ENCODE measurements at regions of chr15 and their contacts with region 1.

Region 1: GRCh38 chr15:40564591-40565332 is at the start of gene CCDC32:
- DNase-seq: peak; percentile 99
- H3K4me3 ChIP-seq: peak within 1 kb of the TSS; percentile 66 to 81 (median 71)
- H3K27ac ChIP-seq: peak within 1 kb of the TSS; percentile 85 to 93 (median 92)
- H3K4me1 ChIP-seq: peaks cover 22 to 46% (median 35%) of the 10 kb centered on the region in 4 donors
- H3K27me3 ChIP-seq: no peaks in the 10 kb centered on the region
- CTCF ChIP-seq: no peak
- EP300 ChIP-seq: no peak
- POLR2A ChIP-seq: peak; percentile 26
- total RNA-seq, gene CCDC32: 24.9 to 38.3 (median 36.0) TPM

Region 2: DNA sequence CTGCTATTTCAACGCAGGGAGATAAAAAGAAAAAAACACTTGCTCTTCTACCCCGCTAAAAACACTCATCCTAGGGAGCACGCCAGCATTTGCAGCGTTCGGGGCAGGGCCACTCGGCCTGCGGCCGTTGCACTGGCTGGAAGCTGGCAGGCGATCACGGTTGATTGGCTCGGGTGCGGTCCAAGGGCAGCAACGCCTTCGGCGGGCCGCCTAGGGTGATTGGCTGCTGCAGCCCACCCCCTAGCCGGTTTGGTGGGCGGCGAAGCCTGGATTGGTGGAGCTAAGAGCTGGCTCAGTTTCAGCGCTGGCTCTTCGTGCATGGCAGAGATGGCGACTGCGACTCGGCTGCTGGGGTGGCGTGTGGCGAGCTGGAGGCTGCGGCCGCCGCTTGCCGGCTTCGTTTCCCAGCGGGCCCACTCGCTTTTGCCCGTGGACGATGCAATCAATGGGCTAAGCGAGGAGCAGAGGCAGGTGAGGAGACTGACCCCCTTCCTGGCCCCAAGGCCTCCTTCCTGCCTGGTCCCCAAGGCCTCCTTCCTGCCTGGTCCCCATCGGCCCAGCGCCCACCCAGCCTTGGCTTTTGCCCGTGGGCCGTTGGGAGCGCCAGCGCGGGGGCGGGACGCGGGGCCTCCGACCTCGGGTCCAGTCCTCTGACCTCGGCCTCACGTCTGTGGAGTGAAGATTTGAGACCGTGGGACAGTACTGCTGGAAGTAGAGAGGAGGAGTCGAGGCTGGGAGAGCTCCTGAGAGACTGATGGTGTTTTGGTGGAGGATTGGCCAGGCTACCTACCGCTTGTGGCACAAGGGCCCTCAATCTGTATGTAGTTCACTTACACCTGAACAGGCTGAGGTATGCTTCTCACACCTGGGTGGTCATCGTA is 159.0 kb before region 1 on chr15 and contains the start of gene IVD:
- intact Hi-C with region 1: no loop called
- DNase-seq: peak; percentile 98
- H3K4me3 ChIP-seq: peak within 1 kb of the TSS; percentile 73 to 94 (median 88)
- H3K27ac ChIP-seq: peak within 1 kb of the TSS; percentile 78 to 85 (median 82)
- H3K4me1 ChIP-seq: peaks cover 21 to 33% (median 29%) of the 10 kb centered on the region in 4 donors
- H3K27me3 ChIP-seq: no peaks in the 10 kb centered on the region
- CTCF ChIP-seq: no peak
- EP300 ChIP-seq: no peak
- POLR2A ChIP-seq: no peak
- total RNA-seq, gene IVD: 38.8 to 50.7 (median 44.7) TPM

Region 3: GRCh38 chr15:40440743-40441564 is 123.8 kb before region 1 on chr15 and contains the start of gene BAHD1:
- intact Hi-C with region 1: no loop called
- DNase-seq: peak; percentile 99
- H3K4me3 ChIP-seq: peak within 1 kb of the TSS; percentile 96 to 100 (median 96)
- H3K27ac ChIP-seq: peak within 1 kb of the TSS; percentile 84 to 89 (median 86)
- H3K4me1 ChIP-seq: peaks cover 63 to 75% (median 71%) of the 10 kb centered on the region in 4 donors
- H3K27me3 ChIP-seq: peaks cover 0 to 31% (median 12%) of the 10 kb centered on the region in 4 donors
- CTCF ChIP-seq: peak in 1 of 3 experiments; percentile 8
- EP300 ChIP-seq: no peak
- POLR2A ChIP-seq: no peak
- total RNA-seq, gene BAHD1: 11.6 to 29.6 (median 22.3) TPM

Region 4: GRCh38 chr15:40523611-40524010 is 41.2 kb before region 1 on chr15:
- intact Hi-C with region 1: loop called (anchors 5 kb)
- DNase-seq: no peak
- H3K4me3 ChIP-seq: no peak overlapping the region
- H3K27ac ChIP-seq: no peak overlapping the region
- H3K4me1 ChIP-seq: peaks cover 0 to 2% (median 0%) of the 10 kb centered on the region in 4 donors
- H3K27me3 ChIP-seq: no peaks in the 10 kb centered on the region
- CTCF ChIP-seq: no peak
- EP300 ChIP-seq: no peak
- POLR2A ChIP-seq: no peak

Region 5: DNA sequence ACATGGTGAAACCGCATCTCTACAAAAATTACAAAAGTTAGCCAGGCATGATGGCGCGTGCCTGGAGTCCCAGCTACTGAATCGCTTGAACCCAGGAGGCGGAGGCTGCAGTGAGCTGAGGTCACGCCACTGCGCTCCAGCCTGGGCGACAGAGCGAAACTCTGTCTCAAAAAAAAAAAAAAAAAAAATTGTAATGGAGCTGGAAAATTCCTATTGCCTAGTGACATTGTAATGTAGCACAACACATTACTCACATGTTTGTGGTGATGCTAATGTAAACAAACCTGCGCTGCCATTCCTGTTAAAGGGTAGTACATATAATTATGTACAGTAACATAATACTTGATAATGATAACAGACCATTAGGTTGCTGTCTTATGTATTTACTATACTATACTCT is 68.4 kb after region 1 on chr15:
- intact Hi-C with region 1: no loop called
- DNase-seq: no peak
- H3K4me3 ChIP-seq: no peak overlapping the region
- H3K27ac ChIP-seq: no peak overlapping the region
- H3K4me1 ChIP-seq: no peaks in the 10 kb centered on the region
- H3K27me3 ChIP-seq: no peaks in the 10 kb centered on the region
- CTCF ChIP-seq: no peak
- EP300 ChIP-seq: no peak
- POLR2A ChIP-seq: no peak

Region 6: GRCh38 chr15:41660235-41661077 is 1095.7 kb after region 1 on chr15 and contains the start of gene MGA:
- intact Hi-C with region 1: no loop called
- DNase-seq: peak; percentile 95
- H3K4me3 ChIP-seq: peak within 1 kb of the TSS; percentile 60 to 71 (median 64)
- H3K27ac ChIP-seq: peak within 1 kb of the TSS; percentile 75 to 86 (median 81)
- H3K4me1 ChIP-seq: peaks cover 16 to 53% (median 41%) of the 10 kb centered on the region in 4 donors
- H3K27me3 ChIP-seq: no peaks in the 10 kb centered on the region
- CTCF ChIP-seq: no peak
- EP300 ChIP-seq: no peak
- POLR2A ChIP-seq: no peak
- total RNA-seq, gene MGA: 25.3 to 39.4 (median 31.5) TPM